PC-9 (cell line): ENCODE measurements at regions of chr6 and their contacts with region 1.

Region 1: GRCh38 chr6:27644528-27644927 is 171.6 kb upstream of the ZNF184 start:
- DNase-seq: no peak
- H3K4me3 ChIP-seq: no peak overlapping the region
- H3K27ac ChIP-seq: no peak overlapping the region
- H3K4me1 ChIP-seq: no peaks in the 10 kb centered on the region
- H3K27me3 ChIP-seq: no peaks in the 10 kb centered on the region
- CTCF ChIP-seq: no peak

Region 2: DNA sequence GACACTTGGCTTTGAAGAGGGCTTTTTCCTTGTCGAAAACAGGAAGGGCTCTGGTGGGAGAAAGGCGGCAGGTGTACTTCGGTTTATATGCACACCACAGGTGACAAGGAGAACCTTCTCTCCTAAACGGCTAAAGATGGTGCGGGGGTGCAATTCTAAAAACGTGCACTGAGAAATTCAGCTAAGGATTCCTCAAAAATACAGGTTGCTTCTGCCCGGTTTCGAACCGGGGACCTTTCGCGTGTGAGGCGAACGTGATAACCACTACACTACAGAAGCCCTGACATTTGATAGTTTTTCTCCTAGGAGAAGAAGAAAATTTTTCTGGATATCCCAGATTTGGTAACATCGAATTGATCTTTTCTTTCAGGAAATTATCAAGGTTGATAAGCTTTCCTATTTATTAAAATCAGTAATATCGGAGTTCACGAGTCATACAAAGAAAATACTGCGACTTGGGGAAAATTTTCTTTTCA is 364.4 kb before region 1 on chr6:
- CTCF ChIA-PET with region 1: no interaction called
- POLR2A ChIA-PET with region 1: no interaction called
- intact Hi-C with region 1: no loop called
- DNase-seq: peak; percentile 61 to 70
- H3K4me3 ChIP-seq: peak overlapping the region; percentile 60
- H3K27ac ChIP-seq: peak overlapping the region; percentile 3; the same call in 1 of the 2 replicates
- H3K4me1 ChIP-seq: peaks cover 5% of the 10 kb centered on the region
- H3K27me3 ChIP-seq: no peaks in the 10 kb centered on the region
- CTCF ChIP-seq: no peak

Region 3: DNA sequence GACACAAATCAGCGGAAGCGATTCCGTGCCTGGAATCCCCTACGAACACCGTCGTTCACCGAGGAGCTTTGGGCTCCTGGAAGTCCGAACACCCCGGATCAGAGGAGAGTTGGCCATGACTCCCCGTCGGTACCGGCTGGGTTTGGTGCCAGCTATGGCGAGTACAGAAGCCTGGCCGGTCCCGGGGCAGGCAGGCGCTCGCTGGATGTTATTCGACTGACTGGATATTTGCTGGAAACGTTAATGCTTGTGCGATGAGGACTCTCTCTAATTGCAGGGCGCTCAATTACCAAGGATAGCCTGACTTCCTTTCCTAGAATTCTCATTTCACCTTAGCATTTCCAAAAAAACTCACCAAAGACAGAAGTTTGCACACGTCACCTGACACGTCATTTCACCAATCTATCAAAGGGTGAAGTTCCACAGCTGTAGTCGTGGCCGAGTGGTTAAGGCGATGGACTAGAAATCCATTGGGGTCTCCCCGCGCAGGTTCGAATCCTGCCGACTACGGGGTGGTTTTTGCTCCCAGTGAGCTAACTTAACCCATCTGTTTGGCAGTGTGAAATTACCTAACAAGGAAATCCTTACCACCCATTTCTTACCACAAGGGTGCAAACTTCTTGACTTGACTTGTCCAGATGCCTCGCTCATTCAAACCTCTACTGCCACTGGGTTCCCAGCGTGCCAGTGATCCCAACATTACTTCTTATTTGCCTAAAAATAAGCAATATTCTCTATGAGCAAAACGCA is 149.0 kb before region 1 on chr6:
- CTCF ChIA-PET with region 1: no interaction called
- POLR2A ChIA-PET with region 1: interaction called, 10 read pairs
- intact Hi-C with region 1: no loop called
- DNase-seq: peak; percentile 40 to 44
- H3K4me3 ChIP-seq: peak overlapping the region; percentile 55; the same call in 1 of the 2 replicates
- H3K27ac ChIP-seq: no peak overlapping the region
- H3K4me1 ChIP-seq: no peaks in the 10 kb centered on the region
- H3K27me3 ChIP-seq: no peaks in the 10 kb centered on the region
- CTCF ChIP-seq: no peak

Region 4: GRCh38 chr6:27694545-27694870 is 50.0 kb after region 1 on chr6:
- CTCF ChIA-PET with region 1: no interaction called
- POLR2A ChIA-PET with region 1: no interaction called
- intact Hi-C with region 1: no loop called
- DNase-seq: no peak
- H3K4me3 ChIP-seq: peak overlapping the region; percentile 65
- H3K27ac ChIP-seq: peak overlapping the region; percentile 79
- H3K4me1 ChIP-seq: peaks cover 8% of the 10 kb centered on the region; the same call in 1 of the 2 replicates
- H3K27me3 ChIP-seq: no peaks in the 10 kb centered on the region
- CTCF ChIP-seq: no peak

Region 5: GRCh38 chr6:27720607-27721580 is 76.4 kb after region 1 on chr6:
- CTCF ChIA-PET with region 1: no interaction called
- POLR2A ChIA-PET with region 1: interaction called, 13 read pairs
- intact Hi-C with region 1: no loop called
- DNase-seq: peak; percentile 57 to 71
- H3K4me3 ChIP-seq: peak overlapping the region; percentile 49
- H3K27ac ChIP-seq: peak overlapping the region; percentile 68
- H3K4me1 ChIP-seq: peaks cover 21% of the 10 kb centered on the region
- H3K27me3 ChIP-seq: no peaks in the 10 kb centered on the region
- CTCF ChIP-seq: peak; percentile 23; the same call in 1 of the 2 replicates